Activated CD4-positive, alpha-beta T cell treated with anti-CD3 and anti-CD28 coated beads, Interleukin-2, amount 10 ng/mL, durations not matched to agents 24 days and 14 days (primary cell): ENCODE measurements at regions of chr3 and their contacts with region 1.

Region 1: GRCh38 chr3:5194341-5195159 is 7.0 kb downstream of the EDEM1 start:
- DNase-seq: peak; percentile 85
- H3K4me3 Mint-ChIP-seq: peak overlapping the region; percentile 79
- H3K27ac Mint-ChIP-seq: peak overlapping the region; percentile 94
- H3K4me1 Mint-ChIP-seq: peaks cover 85% of the 10 kb centered on the region
- H3K27me3 Mint-ChIP-seq: no peaks in the 10 kb centered on the region

Region 2: DNA sequence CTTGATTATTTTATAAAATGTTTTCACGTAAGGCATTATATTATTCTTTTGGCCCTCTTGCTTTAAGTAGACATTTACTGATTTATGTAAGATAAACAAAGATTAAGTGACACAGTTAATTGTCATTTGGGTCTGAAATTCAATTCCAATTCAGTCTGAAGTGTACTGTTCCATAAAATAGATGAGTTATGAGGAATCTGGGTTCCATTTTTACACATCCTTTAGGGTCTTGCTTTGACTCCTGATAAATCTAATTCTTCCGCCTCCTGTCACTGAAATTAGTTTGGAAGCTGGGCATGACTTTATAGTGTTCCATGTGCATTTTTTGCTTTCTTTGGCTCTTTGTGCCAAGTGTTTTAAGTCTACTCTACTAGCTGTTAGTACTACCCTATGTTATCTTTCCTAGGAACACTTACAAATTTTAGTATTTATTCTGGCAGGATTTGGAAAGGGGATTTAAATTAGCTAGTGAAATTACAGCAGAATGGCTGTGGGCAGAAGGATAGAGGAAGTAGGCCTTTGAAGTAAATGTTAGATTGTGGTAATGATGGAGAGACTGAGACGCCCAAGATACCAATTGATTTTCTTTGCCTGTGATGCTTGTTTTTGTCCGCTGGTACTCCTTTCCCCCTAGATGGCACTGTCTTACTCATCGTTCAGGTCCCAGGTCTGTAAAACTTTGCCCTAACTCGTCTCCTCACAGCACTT is 58.2 kb before region 1 on chr3:
- intact Hi-C with region 1: loop called (anchors 1 kb)
- DNase-seq: peak; percentile 77
- H3K4me3 Mint-ChIP-seq: no peak overlapping the region
- H3K27ac Mint-ChIP-seq: peak overlapping the region; percentile 19
- H3K4me1 Mint-ChIP-seq: peaks cover 36% of the 10 kb centered on the region
- H3K27me3 Mint-ChIP-seq: no peaks in the 10 kb centered on the region